Posterior cingulate gyrus (tissue), 11 donors: ENCODE measurements at regions of chr15 and their contacts with region 1.

Region 1: DNA sequence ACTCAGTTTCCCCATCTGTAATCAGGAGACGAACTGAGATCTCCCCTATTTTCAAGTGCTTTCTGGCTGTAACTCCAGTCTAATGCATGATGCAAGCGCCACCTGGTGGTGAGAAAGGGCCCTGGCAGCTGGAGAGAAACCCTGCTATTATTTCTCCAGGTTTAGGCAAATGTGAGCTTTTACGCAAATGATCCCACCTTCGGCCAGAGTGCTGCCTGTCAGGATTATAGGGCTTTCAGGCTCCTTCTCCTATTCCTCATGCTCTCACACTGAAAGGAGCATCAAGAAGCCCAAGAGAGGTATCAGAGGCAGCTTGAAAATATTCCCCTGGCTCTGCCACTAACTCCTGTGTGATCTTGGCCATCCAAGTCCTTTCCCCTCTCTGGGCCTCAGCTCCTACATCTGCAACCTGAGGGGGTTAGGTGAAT is 93.9 kb upstream of the RASGRF1 start:
- DNase-seq: peak; percentile 52 to 97 (median 85)

Region 2: GRCh38 chr15:78909791-78910228 is 274.7 kb before region 1 on chr15:
- intact Hi-C with region 1: loop called (anchors 10 kb)
- DNase-seq: no peak

Region 3: DNA sequence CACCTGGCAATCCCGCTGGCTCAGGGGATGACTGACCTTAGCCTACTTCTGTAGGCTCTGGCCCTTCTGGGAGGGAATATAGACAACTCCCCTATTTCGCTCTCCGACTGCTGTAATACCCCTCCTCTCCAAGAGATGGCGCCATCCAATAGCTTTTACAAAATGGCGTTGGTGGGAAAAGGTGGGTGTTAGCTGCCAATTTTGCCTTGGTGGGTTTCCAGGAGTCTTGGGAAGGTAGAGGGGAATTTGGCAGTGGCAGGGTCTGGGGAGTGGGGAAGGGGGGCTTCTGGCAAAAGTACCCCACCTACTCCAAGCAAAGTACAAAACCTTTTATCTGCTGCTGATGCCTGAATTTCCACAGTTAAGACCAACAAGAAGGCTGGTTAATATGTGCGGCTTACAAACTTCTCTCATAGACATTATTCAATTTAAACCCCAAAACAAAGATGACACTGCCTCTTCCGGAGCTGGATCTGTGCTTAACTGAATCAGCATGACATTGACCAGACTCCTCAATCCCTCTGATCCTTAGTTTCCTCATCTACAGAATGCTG is 156.0 kb before region 1 on chr15:
- intact Hi-C with region 1: loop called (anchors 1 kb)
- DNase-seq: peak in 6 of 10 donors; percentile 56 to 78 (median 62)

Region 4: GRCh38 chr15:79089890-79090486 is 94.5 kb before region 1 on chr15:
- intact Hi-C with region 1: loop called (anchors 10 kb)
- DNase-seq: no peak